B cell (primary cell): ENCODE measurements at regions of chr14 and their contacts with region 1.

Region 1: GRCh38 chr14:61568572-61569131 is 126.7 kb upstream of the HIF1A start:
- DNase-seq: peak; percentile 94
- ATAC-seq: peak; percentile 92
- H3K4me3 ChIP-seq: peak overlapping the region; percentile 31 to 58 (median 42)
- H3K4me3 Mint-ChIP-seq: peak overlapping the region; percentile 84
- H3K27ac ChIP-seq: peak overlapping the region; percentile 77 to 91
- H3K27ac Mint-ChIP-seq: peak overlapping the region; percentile 93
- H3K4me1 ChIP-seq: peaks cover 41 to 48% of the 10 kb centered on the region in 2 donors
- H3K4me1 Mint-ChIP-seq: peaks cover 57% of the 10 kb centered on the region
- H3K27me3 ChIP-seq: no peaks in the 10 kb centered on the region
- H3K27me3 Mint-ChIP-seq: no peaks in the 10 kb centered on the region
- CTCF ChIP-seq: peak; percentile 31

Region 2: DNA sequence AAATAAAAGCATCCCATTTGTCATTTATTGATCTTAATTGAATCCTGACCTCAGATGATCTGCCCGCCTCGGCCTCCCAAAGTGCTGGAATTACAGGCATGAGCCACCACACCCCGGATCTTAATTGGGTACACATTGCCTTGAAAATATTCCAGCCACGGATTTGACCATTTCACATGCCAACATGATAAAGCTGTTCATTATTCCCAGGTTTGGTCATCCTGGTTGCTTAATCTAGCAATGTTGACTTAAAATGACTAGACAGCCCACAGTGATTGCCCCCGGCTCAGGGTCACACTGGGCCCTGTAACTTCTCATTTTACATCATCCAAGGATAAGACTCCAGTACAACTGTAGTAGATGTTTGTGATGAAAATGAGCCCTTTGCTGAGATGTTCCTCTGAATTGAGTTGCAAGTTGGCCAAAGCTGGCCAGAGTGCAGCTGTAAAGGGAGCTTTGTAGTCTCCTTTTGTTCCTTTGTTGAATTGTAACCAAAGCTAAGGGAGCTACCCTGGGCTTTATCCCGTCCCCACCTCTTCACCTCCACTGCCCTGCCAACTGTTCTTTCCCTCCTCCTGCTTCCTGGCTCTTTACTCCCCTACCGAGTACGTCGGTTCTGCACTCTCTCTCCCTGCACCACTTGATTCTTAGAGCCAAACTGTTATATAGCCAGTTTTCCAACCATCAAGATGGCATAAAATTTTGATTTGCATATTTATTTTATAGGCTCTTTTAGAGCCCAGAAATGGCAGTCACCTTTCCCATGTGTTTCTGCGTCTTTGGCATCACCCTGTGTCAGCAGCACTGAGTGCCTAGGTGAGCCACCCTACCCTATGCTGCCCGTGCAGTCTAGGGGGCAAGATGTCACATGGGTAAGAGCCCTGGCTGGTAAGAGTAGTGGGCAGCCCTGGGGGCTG is 14.7 kb before region 1 on chr14:
- CTCF ChIA-PET with region 1: interaction called, 9 read pairs
- POLR2A ChIA-PET with region 1: interaction called, 6 read pairs
- intact Hi-C with region 1: loop called (anchors 1 kb)
- DNase-seq: no peak
- ATAC-seq: no peak
- H3K4me3 ChIP-seq: peak overlapping the region in 1 of 5 experiments; percentile 4
- H3K4me3 Mint-ChIP-seq: peak overlapping the region; percentile 85
- H3K27ac ChIP-seq: peak overlapping the region; percentile 74 to 81
- H3K27ac Mint-ChIP-seq: peak overlapping the region; percentile 98
- H3K4me1 ChIP-seq: peaks cover 32 to 47% of the 10 kb centered on the region in 2 donors
- H3K4me1 Mint-ChIP-seq: peaks cover 58% of the 10 kb centered on the region
- H3K27me3 ChIP-seq: no peaks in the 10 kb centered on the region
- H3K27me3 Mint-ChIP-seq: no peaks in the 10 kb centered on the region
- CTCF ChIP-seq: no peak

Region 3: GRCh38 chr14:61662437-61663311 is 94.0 kb after region 1 on chr14:
- CTCF ChIA-PET with region 1: no interaction called
- POLR2A ChIA-PET with region 1: interaction called, 5 read pairs
- intact Hi-C with region 1: loop called (anchors 2 kb)
- DNase-seq: peak; percentile 59
- ATAC-seq: peak; percentile 66
- H3K4me3 ChIP-seq: peak overlapping the region in 1 of 5 experiments; percentile 52
- H3K4me3 Mint-ChIP-seq: peak overlapping the region; percentile 84
- H3K27ac ChIP-seq: peak overlapping the region; percentile 48 to 82
- H3K27ac Mint-ChIP-seq: peak overlapping the region; percentile 91
- H3K4me1 ChIP-seq: peaks cover 59 to 60% of the 10 kb centered on the region in 2 donors
- H3K4me1 Mint-ChIP-seq: peaks cover 59% of the 10 kb centered on the region
- H3K27me3 ChIP-seq: no peaks in the 10 kb centered on the region
- H3K27me3 Mint-ChIP-seq: no peaks in the 10 kb centered on the region
- CTCF ChIP-seq: no peak

Region 4: GRCh38 chr14:61710853-61711817 is 142.5 kb after region 1 on chr14:
- CTCF ChIA-PET with region 1: interaction called, 3 read pairs
- POLR2A ChIA-PET with region 1: no interaction called
- intact Hi-C with region 1: loop called (anchors 5 kb)
- DNase-seq: peak; percentile 32
- ATAC-seq: peak; percentile 60
- H3K4me3 ChIP-seq: no peak overlapping the region
- H3K4me3 Mint-ChIP-seq: peak overlapping the region; percentile 63
- H3K27ac ChIP-seq: peak overlapping the region in 1 of 2 donors; percentile 17
- H3K27ac Mint-ChIP-seq: peak overlapping the region; percentile 21
- H3K4me1 ChIP-seq: peaks cover 46 to 59% of the 10 kb centered on the region in 2 donors
- H3K4me1 Mint-ChIP-seq: peaks cover 80% of the 10 kb centered on the region
- H3K27me3 ChIP-seq: no peaks in the 10 kb centered on the region
- H3K27me3 Mint-ChIP-seq: no peaks in the 10 kb centered on the region
- CTCF ChIP-seq: no peak

Region 5: DNA sequence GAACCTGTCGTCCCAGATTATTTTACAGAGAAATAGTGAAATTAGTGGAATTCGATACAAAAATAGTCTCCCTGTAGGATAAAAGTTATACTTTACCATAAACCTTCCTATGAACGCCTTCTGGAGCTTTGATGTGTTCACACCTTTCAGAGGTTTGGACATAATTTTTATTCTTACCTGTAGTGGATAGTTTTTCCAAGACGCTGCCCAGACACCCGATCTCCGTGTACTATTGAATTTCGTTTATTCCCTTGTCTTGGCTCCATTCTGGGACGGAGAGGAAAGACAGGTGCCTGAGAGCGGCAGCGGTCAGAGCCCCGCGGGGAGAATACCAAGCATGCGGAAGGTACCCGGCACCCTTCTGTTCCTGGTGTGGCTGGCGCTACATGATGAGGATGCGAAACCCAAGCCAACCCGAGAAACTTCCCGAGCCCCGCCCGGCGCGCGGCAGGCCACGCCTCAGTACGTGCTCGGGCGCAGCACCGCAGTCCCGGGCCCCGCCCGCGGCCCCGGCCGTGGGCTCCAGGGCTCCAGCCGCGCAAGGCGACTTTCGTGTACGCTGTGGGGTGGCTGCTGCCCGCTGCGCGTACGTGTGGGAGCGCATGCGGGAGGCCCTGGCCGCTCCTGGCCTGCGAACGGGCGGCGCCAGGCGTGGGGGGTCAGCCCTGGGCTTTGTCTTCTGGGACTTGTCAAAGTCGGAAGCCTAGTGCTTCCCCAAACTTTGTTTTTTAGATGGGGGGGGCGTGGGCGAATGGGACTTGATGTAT is 182.2 kb after region 1 on chr14:
- CTCF ChIA-PET with region 1: no interaction called
- POLR2A ChIA-PET with region 1: interaction called, 3 read pairs
- intact Hi-C with region 1: loop called (anchors 1 kb)
- DNase-seq: peak; percentile 91
- ATAC-seq: peak; percentile 91
- H3K4me3 ChIP-seq: peak overlapping the region; percentile 47 to 71 (median 59)
- H3K4me3 Mint-ChIP-seq: peak overlapping the region; percentile 92
- H3K27ac ChIP-seq: peak overlapping the region; percentile 47 to 73
- H3K27ac Mint-ChIP-seq: peak overlapping the region; percentile 93
- H3K4me1 ChIP-seq: peaks cover 25 to 27% of the 10 kb centered on the region in 2 donors
- H3K4me1 Mint-ChIP-seq: peaks cover 42% of the 10 kb centered on the region
- H3K27me3 ChIP-seq: no peaks in the 10 kb centered on the region
- H3K27me3 Mint-ChIP-seq: no peaks in the 10 kb centered on the region
- CTCF ChIP-seq: no peak